Breast epithelium (tissue), 4 donors: ENCODE measurements at regions of chr7 and their contacts with region 1.

Region 1: GRCh38 chr7:21352540-21353387 is 75.1 kb upstream of the SP4 start:
- DNase-seq: no peak
- H3K4me3 ChIP-seq: no peak overlapping the region
- H3K27ac ChIP-seq: no peak overlapping the region
- H3K4me1 ChIP-seq: no peaks in the 10 kb centered on the region
- H3K27me3 ChIP-seq: no peaks in the 10 kb centered on the region
- CTCF ChIP-seq: no peak
- POLR2A ChIP-seq: no peak

Region 2: DNA sequence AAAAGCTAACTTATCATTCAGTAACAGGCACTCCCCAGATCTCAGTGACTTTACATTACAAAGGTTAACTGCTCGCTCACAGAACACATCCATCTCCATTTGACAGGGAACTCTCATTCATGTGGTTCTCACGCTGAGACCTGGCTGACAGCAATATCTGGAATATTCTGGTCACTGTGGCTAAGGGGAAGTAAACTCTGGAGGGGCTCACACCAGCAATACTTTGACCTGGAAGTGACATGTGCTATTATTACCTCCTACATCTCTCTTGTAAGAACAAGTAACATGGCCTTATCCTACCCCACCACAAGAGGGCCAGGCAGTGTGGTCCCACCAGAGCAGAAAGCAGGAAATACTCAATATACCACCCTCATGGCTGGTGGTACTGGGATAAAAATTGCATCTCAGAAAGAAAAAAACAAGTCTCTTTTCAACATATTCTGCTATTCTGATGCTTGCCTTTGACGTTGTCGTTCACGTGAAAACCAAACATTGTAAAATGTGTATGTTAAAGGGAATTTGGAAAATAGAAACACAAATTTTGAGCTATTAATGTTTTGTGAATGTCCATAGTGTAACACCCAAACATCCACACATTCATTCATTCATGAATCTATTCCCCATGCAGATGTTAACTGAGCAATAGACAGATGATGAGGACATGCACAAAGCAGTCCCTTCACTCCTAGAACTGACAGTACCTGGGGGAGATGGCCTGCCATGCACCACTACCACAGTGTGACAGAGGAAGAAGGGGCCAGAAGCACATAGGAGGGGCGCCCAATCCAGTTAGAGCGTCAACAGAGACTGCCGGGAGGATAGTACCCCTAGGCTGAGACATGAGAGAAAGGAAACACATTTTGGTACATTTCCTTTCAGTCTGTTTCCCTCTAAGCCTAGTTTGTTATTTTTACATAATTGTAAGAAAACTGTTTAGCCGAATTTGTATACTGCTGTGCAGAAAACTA is 90.9 kb before region 1 on chr7:
- intact Hi-C with region 1: no loop called
- DNase-seq: no peak
- H3K4me3 ChIP-seq: no peak overlapping the region
- H3K27ac ChIP-seq: no peak overlapping the region
- H3K4me1 ChIP-seq: no peaks in the 10 kb centered on the region
- H3K27me3 ChIP-seq: peaks cover 0 to 9% of the 10 kb centered on the region in 2 donors
- CTCF ChIP-seq: no peak
- POLR2A ChIP-seq: no peak

Region 3: GRCh38 chr7:21365866-21366624 is 13.3 kb after region 1 on chr7:
- intact Hi-C with region 1: loop called (anchors 1 kb)
- DNase-seq: no peak
- H3K4me3 ChIP-seq: no peak overlapping the region
- H3K27ac ChIP-seq: no peak overlapping the region
- H3K4me1 ChIP-seq: no peaks in the 10 kb centered on the region
- H3K27me3 ChIP-seq: no peaks in the 10 kb centered on the region
- CTCF ChIP-seq: no peak
- POLR2A ChIP-seq: no peak